Aorta (tissue), 5 donors: ENCODE measurements at regions of chr2 and their contacts with region 1.

Region 1: DNA sequence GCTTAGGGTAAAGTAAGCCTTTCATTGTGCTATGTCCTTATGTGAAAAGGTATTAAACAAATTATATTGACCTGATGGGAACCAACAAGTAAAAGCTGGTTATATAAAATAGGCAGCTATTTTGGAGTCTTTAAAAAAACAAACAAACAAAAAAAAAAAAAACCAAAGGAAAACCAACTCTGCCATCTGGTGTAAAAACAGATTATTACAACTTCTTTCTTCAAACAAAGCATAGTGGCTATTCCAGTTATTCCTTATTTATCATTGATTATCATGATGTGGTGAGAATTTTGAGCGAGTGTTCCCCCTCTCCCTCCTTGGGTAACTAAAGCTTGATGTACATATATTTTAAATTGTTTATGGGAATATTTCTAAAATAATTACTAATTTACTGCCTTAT is 122.4 kb upstream of the FHL2 start:
- DNase-seq: no peak
- ATAC-seq: no peak
- H3K4me3 ChIP-seq: no peak overlapping the region
- H3K27ac ChIP-seq: no peak overlapping the region
- H3K4me1 ChIP-seq: no peaks in the 10 kb centered on the region
- H3K27me3 ChIP-seq: no peaks in the 10 kb centered on the region

Region 2: GRCh38 chr2:105369747-105370690 is 151.2 kb before region 1 on chr2:
- intact Hi-C with region 1: loop called (anchors 1 to 2 kb)
- DNase-seq: peak; percentile 90 to 94
- ATAC-seq: peak; percentile 91
- H3K4me3 ChIP-seq: no peak overlapping the region
- H3K27ac ChIP-seq: no peak overlapping the region
- H3K4me1 ChIP-seq: no peaks in the 10 kb centered on the region
- H3K27me3 ChIP-seq: no peaks in the 10 kb centered on the region

Region 3: GRCh38 chr2:105403785-105404698 is 117.2 kb before region 1 on chr2:
- intact Hi-C with region 1: loop called in 1 of 2 experiments (anchors 10 kb)
- DNase-seq: peak in 1 of 2 donors; percentile 57
- ATAC-seq: no peak
- H3K4me3 ChIP-seq: no peak overlapping the region
- H3K27ac ChIP-seq: no peak overlapping the region
- H3K4me1 ChIP-seq: peaks cover 2 to 6% of the 10 kb centered on the region in 2 donors
- H3K27me3 ChIP-seq: no peaks in the 10 kb centered on the region

Region 4: GRCh38 chr2:105473011-105473410 is 48.2 kb before region 1 on chr2:
- intact Hi-C with region 1: no loop called
- DNase-seq: no peak
- ATAC-seq: no peak
- H3K4me3 ChIP-seq: no peak overlapping the region
- H3K27ac ChIP-seq: no peak overlapping the region
- H3K4me1 ChIP-seq: no peaks in the 10 kb centered on the region
- H3K27me3 ChIP-seq: no peaks in the 10 kb centered on the region

Region 5: GRCh38 chr2:106353676-106354075 is 832.5 kb after region 1 on chr2:
- intact Hi-C with region 1: no loop called
- DNase-seq: no peak
- ATAC-seq: no peak
- H3K4me3 ChIP-seq: no peak overlapping the region
- H3K27ac ChIP-seq: no peak overlapping the region
- H3K4me1 ChIP-seq: no peaks in the 10 kb centered on the region
- H3K27me3 ChIP-seq: no peaks in the 10 kb centered on the region